Cardiac septum (tissue), 1 donor: ENCODE measurements at regions of chrX and their contacts with region 1.

Region 1: DNA sequence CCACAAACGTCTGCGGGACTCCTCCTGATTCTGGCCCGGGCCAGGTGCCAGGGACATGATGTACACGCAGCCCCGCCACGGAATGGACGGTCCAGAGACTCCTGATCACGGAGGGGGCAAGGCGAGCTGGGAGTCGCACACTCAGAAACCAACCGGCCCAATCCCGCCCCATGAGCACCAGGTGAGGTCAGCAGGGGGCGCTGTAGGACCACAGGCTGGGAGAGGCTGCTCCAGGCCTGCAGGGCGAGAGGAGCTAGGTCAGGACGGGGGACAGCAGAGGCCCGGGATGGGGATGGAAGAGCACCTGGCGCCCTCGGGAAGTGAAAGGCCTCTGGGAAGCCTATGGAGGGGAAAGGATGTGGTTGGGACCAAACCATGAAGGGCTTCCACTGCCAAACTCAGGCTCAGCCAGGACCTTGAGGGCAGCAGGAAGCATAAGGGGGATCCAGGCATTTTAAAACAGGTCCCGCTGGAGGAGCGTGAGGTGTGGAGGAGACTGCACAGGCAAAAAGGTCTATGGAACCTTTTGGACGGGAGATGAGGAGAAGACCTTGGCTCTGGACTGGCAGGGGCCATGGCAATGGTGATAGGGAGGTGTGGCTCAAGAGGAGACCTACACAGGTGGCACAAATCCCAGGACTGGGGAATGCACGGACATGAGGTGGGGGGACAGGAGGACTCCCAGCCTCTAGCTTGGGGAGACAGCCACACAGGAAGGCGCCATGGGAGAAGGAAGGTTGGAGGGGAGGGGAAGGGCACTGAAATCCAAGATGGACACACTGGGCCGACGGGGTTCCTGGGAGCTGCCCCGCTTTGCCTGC is 79.2 kb downstream of the MTMR1 start:
- DNase-seq: peak; percentile 89

Region 2: GRCh38 chrX:150663073-150663472 is 109.3 kb before region 1 on chrX:
- intact Hi-C with region 1: no loop called
- DNase-seq: no peak

Region 3: DNA sequence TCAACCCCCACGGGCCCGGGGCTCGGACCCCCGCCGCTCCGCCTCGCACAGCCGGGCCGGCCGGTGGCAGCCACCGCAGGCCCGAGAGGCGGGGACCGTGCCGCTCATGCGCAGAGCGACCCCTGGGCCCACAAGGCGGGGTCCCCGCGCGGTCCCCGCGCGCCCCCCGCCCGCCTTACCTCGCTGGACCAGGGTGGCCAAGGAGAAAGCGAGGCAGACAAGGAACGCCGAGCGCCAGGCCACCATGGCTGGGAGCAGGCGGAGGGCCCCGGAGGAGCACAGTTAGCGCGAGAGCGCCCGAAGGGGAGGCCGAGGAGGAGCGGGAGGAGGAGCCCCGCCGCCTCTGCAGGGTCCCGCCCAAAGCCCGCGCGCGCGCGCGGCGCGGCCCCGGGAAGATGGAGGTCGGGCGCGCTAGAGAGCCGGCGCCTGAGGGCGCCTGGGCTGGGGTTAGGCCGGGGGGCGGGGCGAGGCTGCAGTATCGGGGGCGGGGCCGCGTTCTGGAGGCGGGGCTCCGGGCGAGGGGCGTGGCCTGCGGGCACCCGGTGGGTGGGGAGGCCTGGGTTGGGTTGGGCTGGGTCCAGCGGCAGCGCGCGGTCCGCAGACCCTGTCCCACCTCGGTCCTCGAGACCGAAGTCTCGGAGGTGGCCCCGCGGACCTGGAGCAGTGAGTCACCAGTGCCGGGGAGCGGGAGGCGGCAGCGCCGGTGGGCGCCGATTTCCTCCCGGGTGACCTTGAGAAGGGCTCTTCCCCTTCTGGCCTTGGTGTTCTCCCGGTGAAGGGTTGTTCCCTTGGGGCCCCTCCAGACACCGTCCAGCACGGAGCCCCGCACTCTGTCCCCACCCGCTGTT is 126.2 kb after region 1 on chrX and contains the start of gene CD99L2:
- intact Hi-C with region 1: loop called (anchors 5 kb)
- DNase-seq: peak; percentile 95
- total RNA-seq, gene CD99L2: 90.8 TPM

Region 4: GRCh38 chrX:150982788-150983520 is 210.6 kb after region 1 on chrX and contains the start of gene HMGB3:
- intact Hi-C with region 1: loop called (anchors 5 kb)
- DNase-seq: peak; percentile 92
- total RNA-seq, gene HMGB3: 8.9 TPM

Region 5: DNA sequence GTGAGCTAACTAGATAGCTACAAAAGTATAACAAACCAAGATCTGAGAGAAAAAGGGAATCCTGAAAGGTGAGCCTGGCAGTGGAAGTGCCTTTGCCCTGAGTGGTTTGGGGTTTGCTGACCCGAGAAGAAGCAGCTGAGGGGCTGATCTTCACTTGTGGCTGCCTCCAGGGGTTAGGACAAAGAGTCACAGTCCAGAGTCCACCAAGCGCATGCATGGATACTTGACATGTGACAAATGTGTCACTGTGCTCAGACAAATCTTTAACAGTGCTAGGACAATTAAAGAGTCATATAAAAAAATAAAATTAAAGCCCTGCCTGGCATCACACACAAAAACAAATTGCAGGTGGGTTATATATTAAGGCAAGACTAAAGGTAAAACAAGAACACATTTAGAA is 237.2 kb after region 1 on chrX:
- intact Hi-C with region 1: loop called (anchors 5 kb)
- DNase-seq: no peak

Region 6: DNA sequence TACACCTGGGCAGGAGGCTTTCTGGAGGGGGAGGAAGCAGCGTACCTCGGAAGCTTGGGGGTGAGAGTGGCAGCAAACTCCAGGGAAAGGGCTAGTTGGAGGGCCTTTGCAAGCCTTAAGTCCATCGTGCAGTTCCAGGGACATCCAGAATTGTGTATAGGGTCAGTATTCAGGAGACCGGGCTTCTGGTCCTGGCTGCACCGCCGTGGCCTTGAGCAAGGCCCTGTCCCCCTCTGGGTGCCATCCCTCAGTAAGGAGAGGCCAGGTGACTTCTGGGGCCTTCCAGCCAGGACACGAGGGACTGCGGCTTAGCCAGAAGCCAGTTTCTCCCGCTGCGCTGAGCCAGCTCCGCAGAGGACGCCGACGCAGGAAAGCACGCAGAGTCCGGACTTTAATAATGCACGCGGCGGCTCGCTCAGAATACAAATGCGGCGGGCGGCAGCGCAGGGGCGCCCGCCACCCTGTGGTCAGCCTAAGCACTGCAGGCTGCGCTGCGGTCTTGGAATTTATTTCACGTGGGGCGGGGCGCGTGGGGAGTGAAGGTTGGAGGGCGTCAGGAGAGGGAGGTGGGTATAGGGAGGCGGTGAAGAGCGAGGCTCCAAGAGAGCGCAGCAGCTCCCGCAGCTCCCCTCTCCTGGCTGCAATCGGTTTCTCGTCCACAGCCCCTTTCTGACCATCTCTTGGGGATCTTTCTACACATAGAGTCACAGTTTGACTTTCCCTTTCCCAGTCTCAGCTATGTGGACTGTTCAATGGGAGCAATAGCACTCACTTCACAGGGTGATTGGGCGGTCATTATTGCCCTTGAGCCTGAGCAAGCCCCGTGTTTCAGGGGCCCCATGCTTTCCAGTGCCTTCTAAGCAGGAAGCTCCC is 310.0 kb after region 1 on chrX:
- intact Hi-C with region 1: loop called (anchors 1 kb)
- DNase-seq: peak; percentile 79